Activated CD8-positive, alpha-beta T cell treated with anti-CD3 and anti-CD28 coated beads, Interleukin-2, amount 10 ng/mL, durations not matched to agents 7 days and 5 days (primary cell): ENCODE measurements at regions of chr1 and their contacts with region 1.

Region 1: DNA sequence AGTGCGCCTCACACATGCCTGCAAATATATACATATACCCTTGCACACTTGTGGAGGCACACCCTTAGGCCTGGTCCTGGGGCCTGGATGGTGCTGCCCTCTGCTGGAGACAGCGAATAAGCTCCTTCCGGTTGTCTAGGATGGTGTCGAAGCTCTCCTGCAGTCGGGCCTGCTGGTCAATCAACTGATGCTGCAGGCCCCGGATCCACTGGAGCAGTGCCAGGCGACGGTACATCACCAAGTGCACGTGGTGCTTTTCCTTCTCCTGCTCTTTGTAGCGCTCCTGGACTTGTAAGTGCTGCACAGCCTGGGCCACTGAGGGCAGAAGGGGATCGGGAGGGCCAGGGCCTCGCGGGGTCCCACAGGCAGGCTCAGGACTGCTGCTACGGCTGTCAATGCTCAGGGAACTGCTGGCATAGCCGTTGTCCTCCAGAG is 3.1 kb downstream of the C1orf216 start:
- DNase-seq: peak; percentile 87
- ATAC-seq: peak; percentile 62
- H3K4me3 Mint-ChIP-seq: peak overlapping the region; percentile 35
- H3K27ac Mint-ChIP-seq: no peak overlapping the region
- H3K4me1 Mint-ChIP-seq: peaks cover 35% of the 10 kb centered on the region
- H3K27me3 Mint-ChIP-seq: no peaks in the 10 kb centered on the region

Region 2: DNA sequence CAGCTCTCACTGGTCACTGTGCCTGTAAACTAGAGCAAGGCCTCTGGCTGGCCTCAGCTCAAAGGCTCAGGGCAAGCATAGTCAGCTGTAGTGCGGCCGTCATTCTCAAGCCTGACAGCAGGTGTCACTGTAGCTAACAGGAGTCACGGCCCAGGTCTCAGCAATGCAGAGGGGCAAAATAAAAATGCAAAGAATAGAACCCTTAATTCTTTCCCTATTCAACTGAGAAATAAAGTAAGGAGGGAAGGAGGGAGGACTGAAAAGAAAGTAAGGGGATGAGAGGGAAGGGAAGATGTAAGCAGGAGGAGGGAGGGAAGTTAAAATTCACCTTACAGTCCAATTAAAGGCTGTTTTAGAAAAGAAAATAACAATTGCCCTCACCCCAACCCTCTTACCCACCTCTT is 264.5 kb before region 1 on chr1:
- CTCF ChIA-PET with region 1: interaction called, 32 read pairs
- POLR2A ChIA-PET with region 1: no interaction called
- DNase-seq: peak; percentile 84
- ATAC-seq: peak; percentile 95
- H3K4me3 Mint-ChIP-seq: no peak overlapping the region
- H3K27ac Mint-ChIP-seq: no peak overlapping the region
- H3K4me1 Mint-ChIP-seq: peaks cover 23% of the 10 kb centered on the region
- H3K27me3 Mint-ChIP-seq: no peaks in the 10 kb centered on the region

Region 3: GRCh38 chr1:35564037-35564883 is 151.3 kb before region 1 on chr1:
- CTCF ChIA-PET with region 1: interaction called, 88 read pairs
- POLR2A ChIA-PET with region 1: no interaction called
- DNase-seq: peak; percentile 90
- ATAC-seq: peak; percentile 76
- H3K4me3 Mint-ChIP-seq: no peak overlapping the region
- H3K27ac Mint-ChIP-seq: peak overlapping the region; percentile 30
- H3K4me1 Mint-ChIP-seq: peaks cover 26% of the 10 kb centered on the region
- H3K27me3 Mint-ChIP-seq: no peaks in the 10 kb centered on the region

Region 4: DNA sequence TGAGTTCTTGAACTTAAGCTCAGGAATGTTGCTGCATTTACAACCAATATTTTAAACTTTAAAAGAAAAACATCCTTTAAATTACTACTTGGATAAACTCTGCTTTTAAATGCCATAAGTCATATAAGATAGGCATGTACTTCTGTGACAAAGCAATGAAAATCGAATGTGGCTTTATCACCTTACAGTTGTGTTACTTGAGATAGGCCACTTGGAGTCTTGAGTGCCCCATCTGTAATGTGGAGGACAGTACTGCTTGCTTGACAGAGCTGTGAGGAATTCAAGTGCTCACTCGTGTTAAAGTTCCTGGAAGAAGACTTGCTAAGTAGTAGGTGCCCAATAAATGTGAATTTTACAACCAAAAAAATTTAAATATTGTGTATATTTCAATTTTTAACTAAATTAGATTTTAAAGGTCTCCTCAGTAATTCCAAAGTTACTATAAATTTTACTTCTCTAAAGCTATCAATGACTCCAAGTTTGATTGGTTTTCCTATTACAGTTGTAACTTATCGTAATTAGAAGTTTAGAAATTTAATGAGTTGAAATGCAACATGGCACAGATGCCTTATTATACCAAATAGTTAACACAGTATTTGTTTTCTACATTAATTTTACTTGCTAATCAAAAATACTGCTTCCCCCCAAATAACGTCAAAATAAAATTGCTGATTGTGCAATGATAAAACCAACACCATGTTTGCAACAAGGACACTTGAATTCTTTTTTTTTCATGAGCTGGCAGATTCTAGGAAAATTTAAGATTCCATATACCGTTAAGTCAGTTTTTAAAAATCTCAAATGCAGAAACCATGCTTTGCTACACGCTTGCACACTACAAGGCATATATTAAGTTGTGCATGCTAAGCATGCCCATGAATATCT is 96.1 kb before region 1 on chr1:
- CTCF ChIA-PET with region 1: interaction called, 11 read pairs
- POLR2A ChIA-PET with region 1: no interaction called
- DNase-seq: no peak
- ATAC-seq: no peak
- H3K4me3 Mint-ChIP-seq: no peak overlapping the region
- H3K27ac Mint-ChIP-seq: no peak overlapping the region
- H3K4me1 Mint-ChIP-seq: peaks cover 7% of the 10 kb centered on the region
- H3K27me3 Mint-ChIP-seq: no peaks in the 10 kb centered on the region

Region 5: DNA sequence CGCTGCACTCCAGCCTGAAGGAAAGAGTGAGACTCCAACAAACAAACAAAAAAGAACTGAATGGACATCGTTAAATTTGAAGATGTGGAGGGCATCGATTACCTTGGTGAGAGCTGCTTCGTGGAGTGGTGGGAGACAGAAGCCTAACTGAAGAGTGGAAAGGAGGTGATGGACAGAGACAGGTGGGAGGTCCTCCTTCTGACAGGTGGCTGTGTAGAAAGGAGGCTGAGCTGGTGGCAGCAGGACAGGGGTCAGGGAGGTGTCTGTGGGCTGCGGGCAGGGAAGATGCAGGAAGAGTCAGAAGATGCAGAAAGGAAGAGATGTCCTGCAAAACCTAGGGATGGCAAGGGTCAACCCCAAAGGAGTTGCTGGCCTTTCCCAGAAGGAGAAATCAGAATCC is 27.4 kb before region 1 on chr1:
- CTCF ChIA-PET with region 1: interaction called, 10 read pairs
- POLR2A ChIA-PET with region 1: interaction called, 3 read pairs
- DNase-seq: no peak
- ATAC-seq: no peak
- H3K4me3 Mint-ChIP-seq: no peak overlapping the region
- H3K27ac Mint-ChIP-seq: no peak overlapping the region
- H3K4me1 Mint-ChIP-seq: no peaks in the 10 kb centered on the region
- H3K27me3 Mint-ChIP-seq: peaks cover 37% of the 10 kb centered on the region

Region 6: DNA sequence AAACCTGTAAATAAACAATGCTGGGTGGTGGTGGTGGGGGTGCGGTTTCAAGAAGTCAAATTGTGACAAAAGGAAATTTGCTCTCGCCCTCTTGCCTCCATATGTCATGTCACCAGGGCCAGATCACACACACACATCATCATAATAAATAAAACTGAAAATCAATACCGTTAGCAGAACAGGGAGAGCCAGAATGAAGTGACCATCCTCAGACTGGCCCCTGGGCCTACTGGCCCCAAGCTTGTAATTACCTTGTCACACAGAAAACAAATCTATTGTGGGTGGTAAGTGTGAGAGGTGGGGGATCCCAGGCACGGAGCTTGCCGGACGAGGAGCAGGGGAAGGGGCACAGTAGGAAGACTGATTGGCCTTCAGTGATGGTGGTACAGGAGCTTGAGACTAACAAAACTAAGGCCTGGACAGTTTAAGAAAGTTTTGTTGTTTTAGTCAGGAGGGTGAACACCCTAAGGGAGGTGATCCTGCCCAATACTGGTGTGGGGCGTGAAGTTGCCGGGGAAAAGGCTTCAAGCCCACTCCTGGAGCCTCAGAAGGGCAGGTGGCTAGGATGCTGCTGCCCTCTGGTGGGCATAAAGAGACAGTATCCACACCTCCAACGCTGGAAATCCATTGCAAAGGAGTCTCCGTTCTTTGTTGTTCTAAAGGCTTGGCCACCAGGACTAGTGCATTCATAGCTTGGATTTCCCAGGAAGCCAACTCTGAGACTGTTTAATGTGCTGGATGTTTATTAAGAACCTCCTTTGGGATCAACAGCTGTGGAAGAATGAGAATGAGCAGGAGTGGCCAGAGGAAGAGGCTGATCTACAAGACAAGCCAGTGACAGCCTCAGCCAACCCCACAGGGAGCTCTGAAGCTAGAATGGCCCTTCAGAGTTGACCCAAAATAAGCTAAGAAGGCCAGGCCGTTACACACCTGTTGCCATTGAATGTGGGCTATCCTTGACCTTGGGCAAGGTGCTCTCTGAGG is 11.2 kb after region 1 on chr1:
- CTCF ChIA-PET with region 1: interaction called, 118 read pairs
- POLR2A ChIA-PET with region 1: no interaction called
- DNase-seq: peak; percentile 62
- ATAC-seq: peak; percentile 87
- H3K4me3 Mint-ChIP-seq: no peak overlapping the region
- H3K27ac Mint-ChIP-seq: no peak overlapping the region
- H3K4me1 Mint-ChIP-seq: peaks cover 3% of the 10 kb centered on the region
- H3K27me3 Mint-ChIP-seq: no peaks in the 10 kb centered on the region

Region 7: DNA sequence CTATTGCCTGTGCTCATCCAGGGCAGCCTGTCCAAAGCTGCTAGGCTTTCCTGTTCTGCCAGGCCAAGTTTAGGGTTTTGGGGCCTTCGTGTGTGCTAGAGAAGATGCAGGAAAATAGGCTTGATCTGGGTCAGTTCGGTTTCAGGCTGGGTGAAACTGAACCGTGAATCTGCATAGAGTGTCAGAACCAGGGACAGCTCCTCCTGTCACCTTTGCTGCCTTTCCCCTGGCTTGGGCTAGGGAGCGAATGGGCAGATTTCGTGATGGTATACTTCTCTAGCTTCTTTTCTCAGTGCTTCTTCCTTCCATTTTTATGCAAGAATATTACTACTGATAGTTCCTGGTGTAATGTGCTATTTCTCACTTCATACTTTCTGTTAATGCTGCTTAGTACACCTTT is 161.4 kb after region 1 on chr1:
- CTCF ChIA-PET with region 1: no interaction called
- POLR2A ChIA-PET with region 1: no interaction called
- DNase-seq: peak; percentile 38
- ATAC-seq: peak; percentile 49
- H3K4me3 Mint-ChIP-seq: no peak overlapping the region
- H3K27ac Mint-ChIP-seq: no peak overlapping the region
- H3K4me1 Mint-ChIP-seq: peaks cover 5% of the 10 kb centered on the region
- H3K27me3 Mint-ChIP-seq: no peaks in the 10 kb centered on the region